PC-9 (cell line): ENCODE measurements at regions of chr2 and their contacts with region 1.

Region 1: DNA sequence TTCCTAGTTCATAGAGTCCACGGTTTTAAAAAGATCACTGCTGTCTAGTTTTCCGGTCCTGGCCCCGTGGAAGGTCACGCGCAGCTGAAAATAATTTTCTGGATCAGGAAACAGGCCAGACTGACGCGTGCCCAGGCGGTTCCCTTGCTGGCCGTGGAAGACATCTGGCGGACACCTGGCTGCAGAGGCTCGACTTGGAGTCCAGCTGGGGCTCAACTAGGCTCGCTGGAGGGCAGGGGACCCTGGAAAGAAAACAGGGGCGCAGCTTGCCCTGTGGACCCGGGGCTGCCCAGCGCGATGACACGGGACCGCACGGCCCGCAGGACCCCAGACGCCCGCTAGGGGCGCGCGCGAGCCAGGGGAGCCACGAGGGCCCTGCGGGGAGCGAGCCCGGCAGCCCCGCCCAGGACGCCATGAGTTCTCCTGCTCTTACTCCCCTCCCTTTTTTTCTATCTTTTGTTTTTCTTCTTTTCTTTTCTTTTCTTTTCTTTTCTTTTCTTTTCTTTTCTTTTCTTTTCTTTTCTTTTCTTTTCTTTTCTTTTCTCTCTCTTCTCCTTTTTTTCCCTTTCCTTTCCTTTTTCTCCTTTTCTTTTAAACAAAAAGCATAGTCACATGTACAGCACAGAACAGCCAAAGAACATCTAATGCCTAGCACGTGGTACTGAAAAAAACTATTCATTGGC is 43.2 kb upstream of the UBE2F start:
- DNase-seq: no peak
- H3K4me3 ChIP-seq: no peak overlapping the region
- H3K27ac ChIP-seq: no peak overlapping the region
- H3K4me1 ChIP-seq: peaks cover 23% of the 10 kb centered on the region
- H3K27me3 ChIP-seq: no peaks in the 10 kb centered on the region
- CTCF ChIP-seq: no peak

Region 2: GRCh38 chr2:237966565-237967462 is 43.2 kb after region 1 on chr2 and contains the start of gene UBE2F:
- CTCF ChIA-PET with region 1: no interaction called
- POLR2A ChIA-PET with region 1: no interaction called
- intact Hi-C with region 1: no loop called
- DNase-seq: peak; percentile 92 to 100
- H3K4me3 ChIP-seq: peak within 1 kb of the TSS; percentile 96
- H3K27ac ChIP-seq: peak within 1 kb of the TSS; percentile 91
- H3K4me1 ChIP-seq: peaks cover 45% of the 10 kb centered on the region
- H3K27me3 ChIP-seq: no peaks in the 10 kb centered on the region
- CTCF ChIP-seq: no peak
- total RNA-seq, gene UBE2F: 76.7 and 103 TPM in 2 replicates

Region 3: DNA sequence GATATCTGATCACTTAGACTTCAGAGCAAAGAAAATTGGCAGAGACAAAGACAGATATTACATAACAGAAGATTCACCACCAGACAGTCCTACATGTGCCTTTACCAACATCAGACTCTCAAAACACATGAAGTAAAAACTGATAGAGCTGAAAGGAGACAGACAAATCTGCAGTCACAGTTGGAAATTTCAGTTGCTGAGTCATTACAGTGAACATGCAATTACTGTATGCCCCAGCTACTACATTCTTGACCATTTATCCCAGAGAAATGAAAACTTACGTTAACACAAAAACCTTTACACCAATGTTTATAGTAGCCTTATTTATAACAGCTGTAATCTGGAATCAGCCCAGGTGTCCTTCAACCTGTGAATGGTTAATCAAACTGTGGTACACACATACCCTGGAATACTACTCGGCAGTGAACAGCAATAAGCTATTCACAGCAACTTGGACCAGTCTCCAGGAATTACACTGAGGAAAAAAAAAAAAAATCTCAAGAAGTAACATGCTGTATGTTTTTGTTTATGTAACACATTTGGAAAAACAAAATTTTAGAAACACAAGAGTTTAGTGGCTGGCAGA is 129.7 kb after region 1 on chr2:
- CTCF ChIA-PET with region 1: no interaction called
- POLR2A ChIA-PET with region 1: no interaction called
- intact Hi-C with region 1: no loop called
- DNase-seq: no peak
- H3K4me3 ChIP-seq: no peak overlapping the region
- H3K27ac ChIP-seq: no peak overlapping the region
- H3K4me1 ChIP-seq: no peaks in the 10 kb centered on the region
- H3K27me3 ChIP-seq: no peaks in the 10 kb centered on the region
- CTCF ChIP-seq: no peak

Region 4: DNA sequence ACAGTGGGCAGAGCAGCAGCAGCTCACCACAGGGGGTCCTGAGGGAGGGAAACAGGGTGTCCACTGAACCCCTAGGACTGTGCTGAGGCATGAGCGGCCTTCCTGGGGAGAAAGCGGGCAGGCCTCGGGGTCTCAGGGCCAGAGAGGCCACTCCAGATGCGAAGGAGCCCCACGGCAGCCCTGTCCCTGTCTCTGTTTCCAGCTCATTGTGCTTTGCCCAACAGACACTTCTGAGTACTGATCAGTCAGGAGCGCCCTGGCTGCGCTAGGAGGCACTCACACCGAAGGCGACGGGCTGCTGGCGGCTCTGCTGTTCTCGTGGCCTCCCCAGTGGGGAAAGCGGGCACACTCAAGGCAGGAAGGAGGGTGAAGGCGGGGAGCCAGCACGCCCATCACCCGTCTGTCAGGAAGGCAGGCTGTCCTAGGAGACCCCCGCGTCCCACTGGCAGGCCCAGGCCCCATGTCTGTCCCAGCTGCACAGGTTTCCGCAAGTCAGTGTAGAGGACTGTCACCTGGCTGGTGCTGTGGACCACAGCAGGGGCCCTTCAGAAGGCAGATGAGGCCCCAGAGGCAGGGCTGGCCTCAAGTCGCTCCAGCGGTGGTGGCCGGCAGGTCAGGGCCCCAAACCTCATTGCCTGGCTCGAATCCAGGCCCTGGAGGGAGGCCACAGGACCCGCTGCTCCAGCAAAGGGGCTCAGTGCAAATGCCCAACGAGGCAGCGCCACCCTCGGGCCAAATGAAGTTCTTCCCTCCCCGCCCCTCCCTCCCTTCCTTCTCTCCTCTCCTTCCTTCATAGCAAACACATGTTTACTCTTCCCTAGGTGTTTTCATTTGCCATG is 183.3 kb after region 1 on chr2:
- CTCF ChIA-PET with region 1: interaction called, 16 read pairs
- POLR2A ChIA-PET with region 1: no interaction called
- intact Hi-C with region 1: no loop called
- DNase-seq: peak; percentile 48 to 69
- H3K4me3 ChIP-seq: peak overlapping the region; percentile 45; the same call in 1 of the 2 replicates
- H3K27ac ChIP-seq: no peak overlapping the region
- H3K4me1 ChIP-seq: 0 out of 2 replicates have a peak, but pooled peaks cover 8% of the 10 kb centered on the region
- H3K27me3 ChIP-seq: no peaks in the 10 kb centered on the region
- CTCF ChIP-seq: peak; percentile 62